Activated CD4-positive, alpha-beta T cell treated with anti-CD3 and anti-CD28 coated beads for 36 hours (primary cell): ENCODE measurements at regions of chr18 and their contacts with region 1.

Region 1: DNA sequence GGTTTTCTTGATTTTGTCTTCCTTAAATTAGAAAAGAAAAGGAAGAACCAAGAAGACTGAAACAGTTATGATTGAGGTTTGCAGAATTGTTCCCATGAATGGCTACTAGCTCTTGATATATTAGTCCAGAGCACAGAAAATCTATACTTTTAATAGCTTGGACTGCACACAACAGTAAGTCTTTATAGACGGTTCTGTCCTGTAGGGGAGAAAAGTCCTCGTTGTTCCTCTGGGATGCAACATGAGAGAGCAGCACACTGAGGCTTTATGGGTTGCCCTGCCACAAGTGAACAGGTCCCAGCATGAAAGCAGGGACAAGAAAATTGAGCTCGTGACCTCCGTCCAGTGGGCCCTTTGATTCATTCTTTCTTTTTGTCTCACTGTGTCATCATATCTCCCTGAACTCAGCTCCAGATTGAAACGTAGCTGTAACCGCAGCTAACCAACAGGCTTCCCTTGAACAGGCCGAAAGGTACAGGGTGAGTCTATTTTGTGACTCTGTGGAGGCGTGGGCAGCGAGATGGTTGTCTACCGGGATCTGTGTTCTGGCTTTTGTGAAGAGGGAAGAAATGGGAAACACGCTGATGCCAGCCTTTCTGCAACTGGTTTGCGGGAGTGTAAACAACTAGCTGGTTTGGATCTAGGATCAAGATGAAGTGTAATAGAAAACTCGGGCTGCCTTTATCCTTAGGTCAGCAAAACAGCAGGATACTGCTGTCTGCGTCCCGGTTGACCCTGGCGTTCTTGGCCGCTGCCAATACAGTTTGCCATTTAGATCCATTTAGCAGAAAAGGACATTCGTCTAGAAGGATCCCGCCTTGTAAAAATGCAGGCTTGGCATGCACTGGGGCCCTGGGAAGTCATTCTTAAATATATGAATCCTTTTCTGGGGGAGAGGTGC is 41.8 kb downstream of the RAB31 start:
- DNase-seq: no peak
- ATAC-seq: no peak
- H3K4me3 Mint-ChIP-seq: no peak overlapping the region
- H3K27ac Mint-ChIP-seq: no peak overlapping the region
- H3K4me1 Mint-ChIP-seq: no peaks in the 10 kb centered on the region
- H3K27me3 Mint-ChIP-seq: peaks cover 2% of the 10 kb centered on the region

Region 2: GRCh38 chr18:9629709-9630108 is 120.2 kb before region 1 on chr18:
- CTCF ChIA-PET with region 1: no interaction called
- POLR2A ChIA-PET with region 1: no interaction called
- intact Hi-C with region 1: loop called in 1 of 2 experiments (anchors 5 kb)
- DNase-seq: no peak
- ATAC-seq: no peak
- H3K4me3 Mint-ChIP-seq: no peak overlapping the region
- H3K27ac Mint-ChIP-seq: no peak overlapping the region
- H3K4me1 Mint-ChIP-seq: no peaks in the 10 kb centered on the region
- H3K27me3 Mint-ChIP-seq: peaks cover 8% of the 10 kb centered on the region